Activated B cell treated with CpG ODN at 0.5 μM for 24 hours (primary cell): ENCODE measurements at regions of chr6 and their contacts with region 1.

Region 1: GRCh38 chr6:106608062-106608668 is 21.1 kb downstream of the RTN4IP1 start:
- DNase-seq: no peak
- ATAC-seq: peak; percentile 88
- H3K4me3 Mint-ChIP-seq: no peak overlapping the region
- H3K27ac Mint-ChIP-seq: no peak overlapping the region
- H3K4me1 Mint-ChIP-seq: peaks cover 50% of the 10 kb centered on the region
- H3K27me3 Mint-ChIP-seq: no peaks in the 10 kb centered on the region
- CTCF ChIP-seq: peak; percentile 72

Region 2: GRCh38 chr6:106444777-106445507 is 163.2 kb before region 1 on chr6:
- CTCF ChIA-PET with region 1: interaction called, 6 read pairs
- POLR2A ChIA-PET with region 1: no interaction called
- intact Hi-C with region 1: loop called (anchors 1 kb)
- DNase-seq: no peak
- ATAC-seq: peak; percentile 43
- H3K4me3 Mint-ChIP-seq: no peak overlapping the region
- H3K27ac Mint-ChIP-seq: no peak overlapping the region
- H3K4me1 Mint-ChIP-seq: peaks cover 16% of the 10 kb centered on the region
- H3K27me3 Mint-ChIP-seq: peaks cover 18% of the 10 kb centered on the region
- CTCF ChIP-seq: peak; percentile 25

Region 3: GRCh38 chr6:106637717-106638341 is 29.7 kb after region 1 on chr6:
- CTCF ChIA-PET with region 1: interaction called, 23 read pairs
- POLR2A ChIA-PET with region 1: interaction called, 5 read pairs
- intact Hi-C with region 1: no loop called
- DNase-seq: no peak
- ATAC-seq: peak; percentile 87
- H3K4me3 Mint-ChIP-seq: peak overlapping the region; percentile 69
- H3K27ac Mint-ChIP-seq: peak overlapping the region; percentile 90
- H3K4me1 Mint-ChIP-seq: peaks cover 80% of the 10 kb centered on the region
- H3K27me3 Mint-ChIP-seq: no peaks in the 10 kb centered on the region
- CTCF ChIP-seq: no peak

Region 4: DNA sequence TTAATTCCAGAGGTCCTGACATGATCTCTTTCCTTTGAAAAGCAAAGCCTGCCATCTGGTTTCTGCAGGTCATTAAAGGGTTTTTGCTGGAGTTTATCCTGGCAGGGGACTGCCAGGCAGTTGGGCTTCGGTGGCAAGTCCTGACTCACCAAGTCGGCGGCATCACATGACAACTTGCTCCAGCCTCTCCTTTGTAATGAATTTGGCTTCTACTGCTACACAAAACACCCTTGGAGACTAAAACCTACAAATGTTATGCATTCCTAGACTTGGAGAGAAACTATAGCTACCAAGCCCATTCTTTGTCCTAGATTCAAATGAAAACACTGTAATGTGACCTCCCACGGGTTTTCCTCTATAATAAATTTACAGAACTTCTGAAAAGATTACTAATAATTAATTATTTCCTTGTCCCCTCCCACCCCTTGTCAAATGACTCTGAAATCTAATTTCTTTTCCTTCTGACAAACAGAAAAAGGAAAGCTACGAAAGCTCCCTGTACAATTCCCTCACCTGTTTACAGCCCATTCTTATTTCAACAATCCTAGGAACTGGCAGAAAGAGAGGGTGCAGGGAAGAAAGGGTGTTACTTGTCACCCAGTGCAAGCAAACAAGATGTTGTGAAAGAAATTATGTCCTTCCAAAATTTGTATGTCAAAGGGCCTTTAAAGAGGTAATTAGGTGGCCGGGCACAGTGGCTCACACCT is 84.1 kb after region 1 on chr6:
- CTCF ChIA-PET with region 1: interaction called, 42 read pairs
- POLR2A ChIA-PET with region 1: no interaction called
- intact Hi-C with region 1: loop called (anchors 1 kb)
- DNase-seq: no peak
- ATAC-seq: no peak
- H3K4me3 Mint-ChIP-seq: no peak overlapping the region
- H3K27ac Mint-ChIP-seq: no peak overlapping the region
- H3K4me1 Mint-ChIP-seq: peaks cover 56% of the 10 kb centered on the region
- H3K27me3 Mint-ChIP-seq: no peaks in the 10 kb centered on the region
- CTCF ChIP-seq: no peak

Region 5: DNA sequence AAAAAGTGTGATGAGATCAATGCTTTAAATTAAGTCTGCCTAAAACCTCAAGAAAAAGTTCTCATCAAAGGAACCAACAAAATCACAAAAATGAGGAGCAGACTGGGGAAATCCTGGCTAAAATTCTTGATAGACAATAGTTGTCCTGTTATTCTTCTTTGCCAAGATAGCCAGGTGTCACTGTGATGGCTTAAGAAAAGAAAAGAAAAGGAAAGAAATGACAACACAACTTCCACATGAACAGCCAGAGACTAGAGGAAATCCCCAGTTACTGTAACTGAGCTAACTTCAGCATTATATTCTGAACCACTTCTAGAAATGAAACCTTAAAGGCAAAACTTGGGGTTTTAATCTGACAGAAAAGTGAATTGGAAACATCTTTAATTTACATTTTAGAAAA is 236.8 kb after region 1 on chr6:
- CTCF ChIA-PET with region 1: no interaction called
- POLR2A ChIA-PET with region 1: no interaction called
- intact Hi-C with region 1: loop called (anchors 2 kb)
- DNase-seq: no peak
- ATAC-seq: peak; percentile 58
- H3K4me3 Mint-ChIP-seq: peak overlapping the region; percentile 41
- H3K27ac Mint-ChIP-seq: peak overlapping the region; percentile 72
- H3K4me1 Mint-ChIP-seq: peaks cover 57% of the 10 kb centered on the region
- H3K27me3 Mint-ChIP-seq: no peaks in the 10 kb centered on the region
- CTCF ChIP-seq: no peak

Region 6: GRCh38 chr6:106997390-106998158 is 389.4 kb after region 1 on chr6:
- CTCF ChIA-PET with region 1: interaction called, 5 read pairs
- POLR2A ChIA-PET with region 1: no interaction called
- intact Hi-C with region 1: loop called (anchors 1 kb)
- DNase-seq: peak; percentile 34
- ATAC-seq: peak; percentile 73
- H3K4me3 Mint-ChIP-seq: no peak overlapping the region
- H3K27ac Mint-ChIP-seq: no peak overlapping the region
- H3K4me1 Mint-ChIP-seq: peaks cover 2% of the 10 kb centered on the region
- H3K27me3 Mint-ChIP-seq: no peaks in the 10 kb centered on the region
- CTCF ChIP-seq: peak; percentile 31